ENCODE measurements at regions of chr20 and their contacts with region 1.

Region 1: DNA sequence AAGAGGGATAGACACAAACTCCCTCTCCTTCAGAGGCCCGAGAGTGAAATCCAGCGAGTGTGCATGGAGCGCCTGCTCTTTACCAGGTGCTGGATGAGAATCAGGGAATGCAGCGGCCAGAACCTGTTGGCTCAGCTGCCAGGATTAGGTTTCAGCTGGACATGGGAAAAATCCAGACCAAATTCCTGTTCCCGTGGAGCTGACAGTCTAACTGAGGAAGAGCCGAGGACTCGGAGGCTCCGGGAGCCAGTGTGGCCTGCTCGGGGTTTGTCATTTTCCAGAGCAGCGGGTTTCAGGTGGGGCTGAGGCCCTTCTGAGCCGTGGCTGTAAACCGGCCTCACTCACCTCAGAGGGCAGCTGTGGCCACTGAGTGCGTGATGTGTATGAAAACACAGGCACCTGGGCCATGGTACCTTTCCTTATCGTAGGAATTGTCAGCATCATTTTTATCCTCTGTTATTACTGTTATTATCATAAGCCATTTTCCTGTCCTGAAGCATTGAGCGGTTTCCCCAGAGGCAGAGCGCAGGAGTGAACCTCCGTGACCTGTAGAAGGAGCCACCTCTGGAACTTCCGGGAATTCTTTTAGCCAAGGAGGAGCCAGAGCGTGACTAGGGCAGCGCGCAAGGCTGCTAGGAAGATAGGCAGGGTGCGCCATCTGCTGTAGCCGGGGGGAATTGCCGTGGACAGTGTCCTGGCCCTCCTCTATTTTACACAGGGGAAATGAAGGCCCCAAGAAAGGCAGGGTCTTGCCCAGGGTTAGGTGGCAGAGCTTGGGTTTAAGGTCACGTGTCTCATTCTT is 27.3 kb downstream of the PKIG start:
- DNase-seq: peak; percentile 94
- H3K4me3 ChIP-seq: no peak overlapping the region
- H3K27ac ChIP-seq: peak overlapping the region; percentile 75 to 83
- H3K4me1 ChIP-seq: peaks cover 11% of the 10 kb centered on the region
- H3K27me3 ChIP-seq: no peaks in the 10 kb centered on the region
- CTCF ChIP-seq: peak; percentile 95 to 96 (median 95)
- POLR2A ChIP-seq: no peak

Region 2: GRCh38 chr20:43983359-43983758 is 626.4 kb before region 1 on chr20:
- intact Hi-C with region 1: no loop called
- DNase-seq: peak; percentile 23
- H3K4me3 ChIP-seq: no peak overlapping the region
- H3K27ac ChIP-seq: no peak overlapping the region
- H3K4me1 ChIP-seq: no peaks in the 10 kb centered on the region
- H3K27me3 ChIP-seq: no peaks in the 10 kb centered on the region
- CTCF ChIP-seq: peak in 1 of 3 experiments; percentile 25
- POLR2A ChIP-seq: no peak

Region 3: DNA sequence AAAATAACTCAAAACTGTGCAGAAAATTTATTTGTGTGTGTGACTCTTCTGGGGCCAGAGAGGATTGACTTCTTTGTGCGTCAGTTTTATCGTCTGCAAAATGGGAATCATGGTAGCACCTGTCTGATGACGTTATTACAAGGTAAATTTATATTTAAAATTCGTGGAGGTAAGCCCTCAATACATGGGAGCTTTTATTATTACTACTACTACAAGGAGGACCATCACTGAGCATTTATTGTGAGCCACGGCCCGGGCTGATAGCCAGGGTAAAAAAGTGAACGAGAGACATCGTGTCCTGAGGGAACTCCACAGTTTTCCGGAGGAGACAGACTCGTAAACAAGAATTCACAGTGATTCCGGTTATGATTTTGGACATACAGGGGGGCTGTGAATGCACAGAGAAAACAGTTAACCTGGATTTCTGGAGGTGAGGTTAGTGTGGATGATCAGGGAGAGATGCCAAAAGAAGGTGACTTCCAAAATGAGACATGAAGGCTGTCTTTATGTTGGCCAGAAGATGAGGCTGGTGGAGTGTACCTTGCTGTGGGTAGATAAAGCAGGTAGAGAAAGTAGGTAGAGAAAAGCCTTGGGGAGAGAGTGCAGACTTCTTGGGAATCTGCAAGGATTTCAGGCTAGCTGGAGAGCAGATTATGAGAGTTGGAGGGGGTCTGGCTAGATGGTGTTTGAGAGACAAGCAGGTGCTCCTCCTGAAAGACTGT is 77.3 kb before region 1 on chr20:
- intact Hi-C with region 1: loop called (anchors 10 kb)
- DNase-seq: peak; percentile 59
- H3K4me3 ChIP-seq: peak overlapping the region; percentile 68 to 79
- H3K27ac ChIP-seq: peak overlapping the region; percentile 50 to 60
- H3K4me1 ChIP-seq: no peaks in the 10 kb centered on the region
- H3K27me3 ChIP-seq: no peaks in the 10 kb centered on the region
- CTCF ChIP-seq: no peak
- POLR2A ChIP-seq: no peak

Measured in testis (tissue), 5 donors.